OCI-LY7 (cell line): ENCODE measurements at regions of chr10 and their contacts with region 1.

Region 1: GRCh38 chr10:22606164-22606614 is 108.2 kb downstream of the PIP4K2A start:
- DNase-seq: peak; percentile 86
- H3K4me3 ChIP-seq: peak overlapping the region; percentile 54
- H3K27ac ChIP-seq: peak overlapping the region; percentile 67
- H3K4me1 ChIP-seq: peaks cover 66% of the 10 kb centered on the region
- CTCF ChIP-seq: no peak

Region 2: GRCh38 chr10:20962165-20962564 is 1644.0 kb before region 1 on chr10:
- CTCF ChIA-PET with region 1: no interaction called
- POLR2A ChIA-PET with region 1: no interaction called
- intact Hi-C with region 1: loop called (anchors 10 kb)
- DNase-seq: no peak
- H3K4me3 ChIP-seq: no peak overlapping the region
- H3K27ac ChIP-seq: no peak overlapping the region
- H3K4me1 ChIP-seq: no peaks in the 10 kb centered on the region
- CTCF ChIP-seq: no peak

Region 3: GRCh38 chr10:22589851-22590514 is 16.2 kb before region 1 on chr10:
- CTCF ChIA-PET with region 1: no interaction called
- POLR2A ChIA-PET with region 1: interaction called, 12 read pairs
- intact Hi-C with region 1: no loop called
- DNase-seq: no peak
- H3K4me3 ChIP-seq: no peak overlapping the region
- H3K27ac ChIP-seq: no peak overlapping the region
- H3K4me1 ChIP-seq: peaks cover 18% of the 10 kb centered on the region
- CTCF ChIP-seq: no peak

Region 4: DNA sequence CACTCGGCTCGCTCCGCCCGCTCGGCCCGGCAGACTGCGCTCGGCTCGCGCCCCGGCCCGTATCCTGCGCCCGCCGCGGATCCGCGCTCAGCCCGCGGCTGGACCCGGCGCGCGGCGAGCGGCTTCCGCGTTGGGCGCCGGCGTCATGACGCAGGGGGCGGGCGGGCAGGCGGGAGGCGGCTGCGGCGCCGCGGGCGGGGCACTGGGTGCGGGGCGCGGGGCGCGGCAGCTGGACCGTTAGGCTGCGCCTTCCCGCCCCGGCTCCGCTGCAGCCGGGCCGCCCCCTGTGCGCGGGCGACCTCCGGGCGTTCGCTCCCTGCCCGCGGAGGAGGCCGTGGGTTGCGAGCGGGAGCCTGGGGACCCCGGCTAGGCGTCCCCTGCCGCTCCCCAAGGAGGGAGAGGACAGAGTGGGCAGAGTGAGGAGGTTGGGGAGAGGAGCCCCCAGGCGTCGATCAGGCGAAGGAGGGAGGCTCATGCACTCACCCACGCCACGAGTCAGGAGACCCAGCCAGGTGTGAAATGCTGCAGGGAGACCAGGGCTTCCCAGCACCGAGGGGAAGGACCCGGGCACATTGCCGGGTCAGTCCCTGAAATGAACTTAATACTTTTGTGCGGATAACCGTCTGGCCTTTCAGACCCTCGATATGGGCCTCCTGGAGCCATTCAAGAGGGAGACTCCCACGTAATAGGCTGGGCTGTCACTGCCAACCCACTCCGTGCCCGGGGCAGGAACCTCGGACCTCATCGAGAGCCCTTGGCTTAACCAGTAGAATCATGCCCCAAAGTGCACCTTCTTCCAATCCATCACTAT is 108.5 kb after region 1 on chr10 and contains the start of gene PIP4K2A:
- CTCF ChIA-PET with region 1: no interaction called
- POLR2A ChIA-PET with region 1: interaction called, 4 read pairs
- intact Hi-C with region 1: loop called (anchors 5 kb)
- DNase-seq: peak; percentile 84
- H3K4me3 ChIP-seq: peak within 1 kb of the TSS; percentile 88
- H3K27ac ChIP-seq: peak within 1 kb of the TSS; percentile 41
- H3K4me1 ChIP-seq: peaks cover 28% of the 10 kb centered on the region
- CTCF ChIP-seq: no peak
- total RNA-seq, gene PIP4K2A: 32.5 and 37.9 TPM in 2 replicates

Region 5: GRCh38 chr10:23459344-23459939 is 853.3 kb after region 1 on chr10:
- CTCF ChIA-PET with region 1: no interaction called
- POLR2A ChIA-PET with region 1: no interaction called
- intact Hi-C with region 1: loop called (anchors 10 kb)
- DNase-seq: no peak
- H3K4me3 ChIP-seq: no peak overlapping the region
- H3K27ac ChIP-seq: no peak overlapping the region
- H3K4me1 ChIP-seq: peaks cover 10% of the 10 kb centered on the region
- CTCF ChIP-seq: no peak